ENCODE measurements at regions of chr12 and their contacts with region 1.

Region 1: GRCh38 chr12:22624870-22625761 is at the start of gene ETNK1:
- DNase-seq: peak; percentile 91
- ATAC-seq: peak; percentile 98
- H3K4me3 Mint-ChIP-seq: peak within 1 kb of the TSS; percentile 93
- H3K27ac Mint-ChIP-seq: peak within 1 kb of the TSS; percentile 89
- H3K4me1 Mint-ChIP-seq: peaks cover 43% of the 10 kb centered on the region
- H3K27me3 Mint-ChIP-seq: peaks cover 8% of the 10 kb centered on the region
- CTCF ChIP-seq: no peak
- total RNA-seq, gene ETNK1: 80.9 and 98.5 TPM in 2 replicates

Region 2: DNA sequence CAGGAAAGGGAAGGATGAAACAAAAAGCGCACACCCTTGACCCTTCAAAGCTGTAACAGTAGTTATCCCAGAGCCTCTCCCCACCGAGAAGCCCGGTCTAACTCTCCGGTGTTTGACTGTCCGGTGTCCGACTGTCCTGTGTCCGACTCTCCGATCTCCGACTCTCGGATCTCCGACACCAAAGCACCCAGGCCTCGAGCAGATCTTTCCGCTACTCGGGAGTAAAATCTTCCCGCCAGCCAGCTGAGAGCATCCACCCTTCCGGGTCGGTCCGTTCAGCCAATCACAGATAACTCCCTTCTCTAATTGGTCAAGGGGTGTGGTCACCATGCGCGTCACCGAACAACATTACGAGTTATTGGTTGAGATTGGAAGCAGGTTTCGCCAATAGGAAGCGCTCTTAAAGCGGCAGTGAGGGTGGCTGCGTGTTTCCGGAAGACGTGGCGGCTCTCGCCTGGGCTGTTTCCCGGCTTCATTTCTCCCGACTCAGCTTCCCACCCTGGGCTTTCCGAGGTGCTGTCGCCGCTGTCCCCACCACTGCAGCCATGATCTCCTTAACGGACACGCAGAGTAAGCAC is 1123.6 kb before region 1 on chr12 and contains the starts of genes GOLT1B and RECQL:
- CTCF ChIA-PET with region 1: no interaction called
- POLR2A ChIA-PET with region 1: no interaction called
- intact Hi-C with region 1: loop called (anchors 5 kb)
- DNase-seq: peak; percentile 71
- ATAC-seq: peak; percentile 95
- H3K4me3 Mint-ChIP-seq: no peak within 1 kb of the TSS
- H3K27ac Mint-ChIP-seq: no peak within 1 kb of the TSS
- H3K4me1 Mint-ChIP-seq: peaks cover 41% of the 10 kb centered on the region
- H3K27me3 Mint-ChIP-seq: no peaks in the 10 kb centered on the region
- CTCF ChIP-seq: no peak
- total RNA-seq, gene GOLT1B: 23.6 and 25.9 TPM in 2 replicates
- total RNA-seq, gene RECQL: 60.6 and 61.6 TPM in 2 replicates

Region 3: GRCh38 chr12:22046090-22046967 is 578.8 kb before region 1 on chr12 and contains the start of gene CMAS:
- CTCF ChIA-PET with region 1: no interaction called
- POLR2A ChIA-PET with region 1: no interaction called
- intact Hi-C with region 1: loop called (anchors 1 kb)
- DNase-seq: peak; percentile 62
- ATAC-seq: peak; percentile 91
- H3K4me3 Mint-ChIP-seq: peak within 1 kb of the TSS; percentile 94
- H3K27ac Mint-ChIP-seq: peak within 1 kb of the TSS; percentile 81
- H3K4me1 Mint-ChIP-seq: peaks cover 15% of the 10 kb centered on the region
- H3K27me3 Mint-ChIP-seq: peaks cover 1% of the 10 kb centered on the region
- CTCF ChIP-seq: no peak
- total RNA-seq, gene CMAS: 15.8 and 16.2 TPM in 2 replicates

Region 4: DNA sequence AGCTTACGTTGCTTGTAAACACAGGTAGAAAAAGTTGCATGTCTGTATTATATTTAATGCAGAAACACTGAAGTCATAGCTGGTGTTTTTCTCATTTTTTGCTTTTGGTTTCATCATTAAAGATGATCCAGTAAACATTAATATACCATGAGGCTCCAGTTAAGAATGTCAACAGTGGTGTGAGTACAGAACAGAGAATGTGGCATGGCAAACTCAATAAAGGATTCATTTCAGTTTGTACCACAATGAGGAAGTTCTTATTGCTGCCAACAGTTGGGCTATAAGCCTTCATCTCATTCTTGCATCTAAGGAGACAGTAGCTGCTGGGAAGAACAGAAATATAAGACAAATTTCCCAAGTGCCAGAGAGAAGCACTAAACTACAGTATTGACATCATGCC is 218.5 kb before region 1 on chr12:
- CTCF ChIA-PET with region 1: no interaction called
- POLR2A ChIA-PET with region 1: no interaction called
- intact Hi-C with region 1: no loop called
- DNase-seq: no peak
- ATAC-seq: no peak
- H3K4me3 Mint-ChIP-seq: no peak overlapping the region
- H3K27ac Mint-ChIP-seq: no peak overlapping the region
- H3K4me1 Mint-ChIP-seq: no peaks in the 10 kb centered on the region
- H3K27me3 Mint-ChIP-seq: peaks cover 4% of the 10 kb centered on the region
- CTCF ChIP-seq: no peak

Region 5: GRCh38 chr12:22443379-22444316 is 181.5 kb before region 1 on chr12:
- CTCF ChIA-PET with region 1: no interaction called
- POLR2A ChIA-PET with region 1: no interaction called
- intact Hi-C with region 1: loop called (anchors 5 kb)
- DNase-seq: no peak
- ATAC-seq: peak; percentile 100
- H3K4me3 Mint-ChIP-seq: no peak overlapping the region
- H3K27ac Mint-ChIP-seq: no peak overlapping the region
- H3K4me1 Mint-ChIP-seq: no peaks in the 10 kb centered on the region
- H3K27me3 Mint-ChIP-seq: no peaks in the 10 kb centered on the region
- CTCF ChIP-seq: peak; percentile 37

Region 6: DNA sequence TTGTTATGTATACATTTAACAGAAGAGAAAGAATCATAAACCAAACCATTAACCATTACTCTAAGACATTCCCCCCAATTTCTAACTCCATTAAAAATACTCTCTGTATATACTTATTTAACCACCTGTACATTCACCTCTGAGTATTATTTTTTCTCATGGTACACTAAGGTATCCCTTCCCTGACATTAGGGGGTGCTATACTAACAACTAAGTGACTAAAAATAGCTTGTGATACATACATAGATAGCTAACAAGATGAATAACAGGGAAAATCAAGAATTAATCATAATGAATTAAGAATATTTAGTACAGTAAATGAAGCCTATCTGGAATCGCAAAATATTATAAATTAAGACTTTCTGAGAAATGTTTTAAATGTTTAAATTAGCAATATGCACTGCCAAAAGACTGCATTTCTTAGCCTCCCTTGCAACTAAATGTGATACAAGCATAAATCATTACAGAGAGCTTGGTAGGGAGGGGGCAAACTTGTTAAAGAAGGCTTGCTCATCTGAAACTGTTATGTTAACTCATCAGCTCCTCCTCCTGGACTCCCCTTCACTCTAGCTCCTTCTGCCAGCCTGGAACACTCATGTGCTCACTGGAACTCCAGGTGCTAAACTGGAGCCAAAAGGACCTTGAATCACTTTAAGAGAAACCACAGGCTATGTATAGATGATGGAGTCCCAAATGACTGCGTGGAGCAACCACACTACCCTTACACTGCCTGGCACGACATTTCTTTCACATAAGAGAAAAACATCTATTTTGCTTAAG is 95.6 kb before region 1 on chr12:
- CTCF ChIA-PET with region 1: interaction called, 10 read pairs
- POLR2A ChIA-PET with region 1: interaction called, 3 read pairs
- intact Hi-C with region 1: no loop called
- DNase-seq: no peak
- ATAC-seq: peak; percentile 64
- H3K4me3 Mint-ChIP-seq: no peak overlapping the region
- H3K27ac Mint-ChIP-seq: no peak overlapping the region
- H3K4me1 Mint-ChIP-seq: no peaks in the 10 kb centered on the region
- H3K27me3 Mint-ChIP-seq: no peaks in the 10 kb centered on the region
- CTCF ChIP-seq: no peak

Region 7: DNA sequence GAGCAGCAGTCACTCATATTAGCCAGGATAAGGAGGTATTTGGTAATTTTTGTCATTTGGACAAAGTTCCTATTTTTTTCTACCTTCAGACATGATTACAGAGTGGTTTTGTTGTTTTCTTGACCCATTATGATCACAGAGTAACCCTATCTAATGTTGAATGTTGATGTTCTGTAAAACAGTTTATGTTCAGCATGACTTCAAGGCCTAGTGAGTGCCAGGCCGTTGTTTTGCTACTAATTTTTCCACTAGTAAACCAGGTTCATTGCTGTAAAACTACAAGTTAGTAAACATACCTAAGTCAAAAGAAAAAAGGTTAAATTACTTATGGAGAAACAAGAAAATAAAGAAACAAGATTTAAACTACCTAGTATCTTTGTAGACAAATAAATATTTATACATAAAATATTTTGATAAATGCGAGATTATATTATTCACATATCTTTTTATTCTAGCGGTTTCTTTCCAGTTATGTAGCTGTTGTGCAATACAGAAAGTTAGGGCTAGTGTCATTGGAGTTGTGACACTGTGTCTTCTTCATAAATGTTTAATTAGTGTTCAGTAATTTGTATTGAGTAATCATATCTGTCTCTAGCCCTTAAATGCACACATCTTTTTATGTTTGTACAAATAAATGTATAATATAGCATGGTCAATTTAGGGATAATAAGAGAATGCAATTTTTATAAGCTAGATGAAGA is 16.4 kb after region 1 on chr12:
- CTCF ChIA-PET with region 1: no interaction called
- POLR2A ChIA-PET with region 1: no interaction called
- intact Hi-C with region 1: loop called (anchors 2 kb)
- DNase-seq: no peak
- ATAC-seq: no peak
- H3K4me3 Mint-ChIP-seq: no peak overlapping the region
- H3K27ac Mint-ChIP-seq: no peak overlapping the region
- H3K4me1 Mint-ChIP-seq: peaks cover 33% of the 10 kb centered on the region
- H3K27me3 Mint-ChIP-seq: no peaks in the 10 kb centered on the region
- CTCF ChIP-seq: no peak

Measured in activated B cell treated with CpG ODN at 0.5 μM for 24 hours (primary cell).